Caco-2 (cell line): ENCODE measurements at regions of chr14 and their contacts with region 1.

Region 1: GRCh38 chr14:37594238-37594914 is 673 bp downstream of the FOXA1 start:
- DNase-seq: peak; percentile 89
- H3K4me3 ChIP-seq: peak overlapping the region; percentile 92
- H3K4me3 Mint-ChIP-seq: peak overlapping the region; percentile 84
- H3K27ac Mint-ChIP-seq: peak overlapping the region; percentile 99
- H3K4me1 ChIP-seq: no peaks in the 10 kb centered on the region
- H3K4me1 Mint-ChIP-seq: no peaks in the 10 kb centered on the region
- H3K27me3 ChIP-seq: no peaks in the 10 kb centered on the region
- H3K27me3 Mint-ChIP-seq: no peaks in the 10 kb centered on the region
- CTCF ChIP-seq: peak; percentile 82 to 86

Region 2: DNA sequence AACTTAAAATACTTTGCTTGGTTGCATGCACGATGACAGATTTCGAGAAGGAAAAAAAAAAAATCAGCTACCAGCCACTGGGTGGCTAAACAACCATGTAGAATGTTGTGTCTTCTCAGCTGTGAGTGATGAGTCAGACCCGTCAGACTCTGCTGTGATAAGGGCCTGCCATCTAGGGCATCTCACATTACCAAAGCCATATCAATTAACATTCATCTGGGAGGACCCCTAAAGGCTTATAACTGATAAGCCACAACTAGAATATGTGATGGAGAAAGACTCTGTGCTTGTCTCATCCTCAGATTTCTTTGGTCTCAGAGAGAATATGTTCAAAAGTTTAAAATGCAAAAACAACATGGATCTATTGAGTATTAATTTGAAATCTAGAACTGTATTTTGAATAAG is 821.2 kb before region 1 on chr14:
- CTCF ChIA-PET with region 1: no interaction called
- POLR2A ChIA-PET with region 1: no interaction called
- intact Hi-C with region 1: loop called (anchors 5 kb)
- DNase-seq: peak; percentile 56 to 58
- H3K4me3 ChIP-seq: no peak overlapping the region
- H3K4me3 Mint-ChIP-seq: no peak overlapping the region
- H3K27ac Mint-ChIP-seq: peak overlapping the region; percentile 57
- H3K4me1 ChIP-seq: peaks cover 51% of the 10 kb centered on the region
- H3K4me1 Mint-ChIP-seq: peaks cover 29% of the 10 kb centered on the region
- H3K27me3 ChIP-seq: no peaks in the 10 kb centered on the region
- H3K27me3 Mint-ChIP-seq: no peaks in the 10 kb centered on the region
- CTCF ChIP-seq: peak; percentile 46 to 48

Region 3: GRCh38 chr14:37253905-37254304 is 340.5 kb before region 1 on chr14:
- CTCF ChIA-PET with region 1: interaction called, 3 read pairs
- POLR2A ChIA-PET with region 1: no interaction called
- intact Hi-C with region 1: loop called (anchors 1 kb)
- DNase-seq: no peak
- H3K4me3 ChIP-seq: no peak overlapping the region
- H3K4me3 Mint-ChIP-seq: no peak overlapping the region
- H3K27ac Mint-ChIP-seq: no peak overlapping the region
- H3K4me1 ChIP-seq: peaks cover 35% of the 10 kb centered on the region
- H3K4me1 Mint-ChIP-seq: peaks cover 18% of the 10 kb centered on the region
- H3K27me3 ChIP-seq: no peaks in the 10 kb centered on the region
- H3K27me3 Mint-ChIP-seq: no peaks in the 10 kb centered on the region
- CTCF ChIP-seq: no peak

Region 4: DNA sequence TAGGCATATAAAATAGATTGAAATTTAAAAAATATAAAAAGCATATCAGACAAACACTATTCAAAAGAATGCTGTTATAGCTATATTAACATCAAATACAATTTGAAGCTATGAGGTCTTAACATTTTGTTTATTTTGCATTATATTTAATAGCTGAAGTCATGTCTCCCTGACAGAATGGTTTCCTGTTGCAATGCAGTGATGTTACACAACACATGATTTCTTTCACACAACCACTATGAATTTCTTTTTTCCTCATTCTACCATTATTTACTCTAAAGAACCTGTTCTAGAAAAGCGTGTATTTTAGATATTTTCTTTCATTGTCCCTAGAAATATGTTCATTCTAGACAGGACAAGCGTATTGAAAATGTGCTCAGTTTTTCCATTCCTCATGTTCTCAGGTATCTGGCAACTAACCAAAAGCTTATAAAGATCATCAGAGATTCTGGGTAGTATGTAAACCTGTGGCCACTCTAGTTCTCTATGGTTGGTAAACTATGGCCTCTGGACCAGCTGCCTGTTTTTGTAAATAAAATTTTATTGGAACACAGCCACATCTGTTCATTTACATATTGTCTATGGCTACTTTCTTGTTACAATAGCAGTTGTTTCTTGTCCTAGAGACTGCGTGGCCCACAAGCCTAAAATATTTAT is 183.2 kb before region 1 on chr14:
- CTCF ChIA-PET with region 1: no interaction called
- POLR2A ChIA-PET with region 1: no interaction called
- intact Hi-C with region 1: loop called (anchors 2 kb)
- DNase-seq: no peak
- H3K4me3 ChIP-seq: no peak overlapping the region
- H3K4me3 Mint-ChIP-seq: no peak overlapping the region
- H3K27ac Mint-ChIP-seq: no peak overlapping the region
- H3K4me1 ChIP-seq: peaks cover 51% of the 10 kb centered on the region
- H3K4me1 Mint-ChIP-seq: peaks cover 21% of the 10 kb centered on the region
- H3K27me3 ChIP-seq: no peaks in the 10 kb centered on the region
- H3K27me3 Mint-ChIP-seq: no peaks in the 10 kb centered on the region
- CTCF ChIP-seq: no peak

Region 5: DNA sequence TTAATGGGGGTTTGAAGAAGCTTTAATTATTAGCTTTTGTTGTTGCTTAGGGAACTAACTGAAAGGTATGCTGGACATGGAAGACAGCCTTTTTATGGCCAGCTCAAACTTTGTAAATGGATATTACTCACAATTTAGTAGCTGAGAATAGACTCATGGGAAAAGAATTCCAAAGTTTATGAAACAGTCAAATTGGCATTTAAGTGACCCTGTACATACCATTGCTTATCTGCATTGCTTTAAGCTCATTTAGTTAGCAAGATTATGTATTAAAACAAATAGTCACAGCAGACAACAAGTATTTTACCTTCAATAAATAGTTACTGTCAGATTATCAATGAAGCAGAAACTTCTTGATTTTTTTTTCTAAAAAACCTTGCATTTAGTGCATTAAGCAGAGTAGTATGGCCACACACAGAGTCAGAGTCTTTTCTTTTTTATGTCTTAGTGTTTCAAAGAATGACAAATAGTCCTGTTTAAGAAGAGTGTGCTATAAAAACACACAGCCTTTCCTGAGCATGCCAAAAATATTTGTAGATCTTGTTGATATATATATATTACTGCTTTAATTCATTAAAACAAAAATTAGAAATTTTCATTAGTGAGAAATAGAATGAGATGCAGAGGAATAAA is 103.2 kb after region 1 on chr14:
- CTCF ChIA-PET with region 1: interaction called, 3 read pairs
- POLR2A ChIA-PET with region 1: interaction called, 5 read pairs
- intact Hi-C with region 1: loop called (anchors 1 kb)
- DNase-seq: peak in 1 of 2 experiments; percentile 43
- H3K4me3 ChIP-seq: no peak overlapping the region
- H3K4me3 Mint-ChIP-seq: no peak overlapping the region
- H3K27ac Mint-ChIP-seq: no peak overlapping the region
- H3K4me1 ChIP-seq: peaks cover 36% of the 10 kb centered on the region
- H3K4me1 Mint-ChIP-seq: peaks cover 19% of the 10 kb centered on the region
- H3K27me3 ChIP-seq: no peaks in the 10 kb centered on the region
- H3K27me3 Mint-ChIP-seq: no peaks in the 10 kb centered on the region
- CTCF ChIP-seq: no peak

Region 6: GRCh38 chr14:37977481-37977880 is 383.1 kb after region 1 on chr14:
- CTCF ChIA-PET with region 1: no interaction called
- POLR2A ChIA-PET with region 1: no interaction called
- intact Hi-C with region 1: no loop called
- DNase-seq: no peak
- H3K4me3 ChIP-seq: no peak overlapping the region
- H3K4me3 Mint-ChIP-seq: no peak overlapping the region
- H3K27ac Mint-ChIP-seq: no peak overlapping the region
- H3K4me1 ChIP-seq: no peaks in the 10 kb centered on the region
- H3K4me1 Mint-ChIP-seq: no peaks in the 10 kb centered on the region
- H3K27me3 ChIP-seq: no peaks in the 10 kb centered on the region
- H3K27me3 Mint-ChIP-seq: no peaks in the 10 kb centered on the region
- CTCF ChIP-seq: no peak